G401 (cell line): ENCODE measurements at regions of chr20 and their contacts with region 1.

Region 1: DNA sequence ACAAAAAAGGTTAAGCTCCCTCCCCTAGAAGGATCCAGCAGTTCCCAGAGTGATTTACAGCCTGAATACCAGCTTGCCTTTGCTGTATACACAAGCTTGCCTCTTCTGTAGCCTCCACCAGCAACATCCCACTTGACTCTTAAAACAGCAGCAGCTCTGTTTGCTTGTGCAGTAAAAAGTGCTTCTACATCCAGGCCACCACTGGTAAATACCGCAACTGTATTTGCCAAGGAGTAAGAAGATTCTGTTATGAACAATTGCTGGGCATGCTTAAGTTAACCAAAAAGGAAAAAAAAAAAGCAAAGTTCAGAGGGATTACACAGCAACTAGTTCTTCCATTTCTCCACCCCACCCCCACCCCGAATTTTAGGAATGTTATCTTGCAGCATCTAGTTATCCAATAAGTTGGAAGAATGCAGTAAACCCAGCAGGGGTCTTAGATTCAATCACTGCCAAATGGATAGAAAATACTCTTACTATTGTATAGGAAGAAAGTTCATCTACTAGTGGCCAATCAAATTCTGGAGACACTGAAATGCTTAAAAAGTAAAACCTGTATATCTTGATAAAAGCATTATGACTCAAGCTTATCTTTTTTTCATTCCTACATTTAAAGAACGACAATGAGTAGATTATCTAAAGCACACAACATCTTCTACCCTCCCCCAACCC is 4.8 kb downstream of the SALL4 start:
- DNase-seq: peak; percentile 55

Region 2: DNA sequence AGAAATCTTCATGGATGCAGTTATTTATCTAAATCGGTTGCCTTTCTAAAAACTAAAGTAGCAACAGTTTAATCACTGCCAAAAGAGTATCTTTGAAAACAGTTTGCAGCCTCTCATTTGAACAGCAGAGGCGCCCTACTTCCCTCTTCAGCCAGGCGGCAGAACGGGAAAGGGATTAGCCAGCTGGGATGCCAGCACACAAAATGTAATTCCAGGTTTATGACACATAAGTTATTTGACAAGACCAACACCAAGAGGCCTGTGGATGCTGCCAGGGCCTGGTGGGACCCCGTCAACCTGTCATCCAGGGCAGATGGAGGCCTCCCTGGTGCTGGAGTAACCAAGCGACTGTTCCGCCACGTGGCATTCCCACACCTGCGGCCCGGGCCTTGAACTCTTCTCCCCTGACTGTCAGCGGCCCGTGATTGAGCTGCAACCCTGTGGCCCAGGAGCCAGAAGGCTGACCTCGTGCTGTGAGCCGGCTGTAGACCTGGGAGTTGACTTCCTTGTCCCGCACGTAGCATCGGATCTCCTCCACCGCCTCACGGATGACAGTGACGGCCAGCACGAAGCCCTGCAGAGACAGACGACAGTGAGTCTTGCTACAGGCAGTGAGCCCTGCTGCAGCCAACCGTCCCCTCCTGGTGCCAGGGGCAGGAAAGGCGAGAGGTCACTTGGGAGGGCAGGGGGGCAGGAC is 84.8 kb before region 1 on chr20:
- in situ Hi-C with region 1: loop called (anchors 10 kb)
- DNase-seq: peak; percentile 94

Region 3: DNA sequence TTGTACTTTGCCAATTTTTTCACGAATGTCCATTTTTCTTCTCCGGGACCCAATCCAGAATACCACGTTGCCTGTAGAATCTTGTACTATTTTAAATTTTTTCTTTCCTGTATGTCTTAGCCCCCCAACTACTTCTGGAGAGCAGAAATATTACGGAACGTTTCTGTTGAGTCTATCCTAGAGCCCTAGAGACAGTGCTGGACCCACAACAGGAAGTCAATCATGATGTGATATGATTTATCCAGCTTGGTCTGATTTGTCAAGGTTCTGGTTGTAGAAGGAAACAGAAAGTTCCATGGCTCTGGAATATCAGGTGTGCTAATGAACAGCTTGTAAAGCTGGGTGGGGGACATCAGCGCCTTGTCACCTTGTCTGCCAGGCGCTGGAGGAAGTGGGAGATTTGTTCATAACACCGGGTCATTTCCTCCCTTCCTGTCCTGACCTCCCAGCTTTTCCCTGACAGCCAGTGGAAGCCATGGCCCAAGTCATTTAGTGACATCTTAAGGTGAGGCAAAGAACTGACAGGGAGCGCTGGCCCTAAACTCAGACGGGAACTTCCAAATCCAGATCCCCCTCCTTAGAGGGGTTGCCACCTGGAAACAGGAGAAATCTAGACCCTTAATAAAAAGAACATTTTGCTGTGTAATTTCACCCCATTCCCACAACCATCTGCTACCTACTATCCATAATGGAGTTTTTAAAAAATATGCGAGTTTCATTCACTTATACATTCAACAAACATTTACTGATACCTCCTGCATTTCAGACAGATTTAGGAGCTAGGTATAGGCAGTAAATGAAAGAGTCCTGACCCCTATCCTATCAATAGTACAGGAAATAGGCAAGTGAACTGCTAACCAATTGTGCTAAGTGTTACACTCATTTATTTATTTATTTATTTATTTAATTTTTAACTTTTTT is 263.6 kb after region 1 on chr20:
- in situ Hi-C with region 1: loop called (anchors 25 kb)
- DNase-seq: peak; percentile 32